ENCODE measurements at regions of chrX and their contacts with region 1.

Region 1: DNA sequence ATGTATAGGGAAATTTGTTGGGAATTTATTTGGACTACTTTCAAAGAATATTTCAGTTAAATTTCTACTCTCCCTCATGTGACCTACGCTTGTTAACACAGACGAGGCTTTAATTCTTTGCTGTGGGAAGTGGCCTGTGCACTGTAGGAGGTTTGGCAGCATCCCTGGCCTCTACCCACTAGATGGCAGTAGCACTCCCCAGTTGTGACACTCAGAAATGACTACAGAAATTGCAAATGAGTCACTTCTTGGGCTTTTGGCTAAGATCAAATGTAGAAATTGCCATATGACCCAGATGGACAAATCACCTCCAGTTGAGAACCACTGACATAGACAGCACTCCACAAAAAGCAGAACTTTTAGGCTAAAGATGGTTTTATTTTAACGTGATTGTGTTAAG is 22.1 kb downstream of the PIR start:
- DNase-seq: no peak
- H3K4me3 ChIP-seq: no peak overlapping the region
- H3K27me3 ChIP-seq: no peaks in the 10 kb centered on the region
- CTCF ChIP-seq: peak; percentile 79

Region 2: DNA sequence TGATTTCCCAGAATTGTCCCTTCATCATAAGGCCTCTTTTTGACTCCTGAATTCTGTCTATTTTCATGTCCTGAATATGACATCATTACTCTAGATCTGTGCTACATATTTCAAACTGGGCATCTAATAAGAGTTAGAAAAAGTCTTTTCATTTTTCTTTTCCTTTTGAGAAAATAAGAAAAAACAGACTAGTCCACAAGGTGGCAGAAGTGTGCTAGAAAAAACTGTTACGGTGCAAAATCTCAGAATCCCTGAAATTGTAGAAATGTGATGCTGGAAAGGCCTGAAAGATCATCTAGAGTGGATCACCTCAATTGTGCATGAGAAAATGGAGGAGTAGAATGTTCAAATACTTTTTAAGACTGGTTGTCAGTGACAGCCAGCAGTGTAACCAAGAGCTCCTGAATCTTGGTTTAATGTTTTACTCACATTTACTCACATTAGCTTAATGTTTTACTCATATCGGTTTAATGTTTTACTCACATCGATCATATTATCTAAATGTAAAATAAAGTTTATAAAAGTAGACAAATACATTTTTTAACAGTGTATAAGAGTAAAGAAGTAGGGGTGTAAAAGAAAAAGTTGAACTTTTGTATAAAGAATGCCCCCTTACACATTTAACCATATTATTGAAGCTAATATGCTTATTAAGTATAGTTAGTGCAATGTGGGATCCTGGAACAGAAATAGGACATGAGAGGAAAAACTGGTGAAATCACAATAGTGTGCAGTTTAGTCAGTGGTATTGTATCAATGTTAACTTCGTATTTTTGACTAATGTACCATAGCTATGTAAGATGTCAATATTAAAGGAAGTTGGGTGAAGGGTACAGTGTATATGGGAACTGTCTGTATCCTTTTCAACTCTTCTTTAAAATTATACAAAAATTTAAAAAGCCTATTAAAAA is 170.8 kb before region 1 on chrX:
- CTCF ChIA-PET with region 1: interaction called, 14 read pairs
- POLR2A ChIA-PET with region 1: no interaction called
- DNase-seq: no peak
- H3K4me3 ChIP-seq: no peak overlapping the region
- H3K27me3 ChIP-seq: no peaks in the 10 kb centered on the region
- CTCF ChIP-seq: peak; percentile 45

Region 3: DNA sequence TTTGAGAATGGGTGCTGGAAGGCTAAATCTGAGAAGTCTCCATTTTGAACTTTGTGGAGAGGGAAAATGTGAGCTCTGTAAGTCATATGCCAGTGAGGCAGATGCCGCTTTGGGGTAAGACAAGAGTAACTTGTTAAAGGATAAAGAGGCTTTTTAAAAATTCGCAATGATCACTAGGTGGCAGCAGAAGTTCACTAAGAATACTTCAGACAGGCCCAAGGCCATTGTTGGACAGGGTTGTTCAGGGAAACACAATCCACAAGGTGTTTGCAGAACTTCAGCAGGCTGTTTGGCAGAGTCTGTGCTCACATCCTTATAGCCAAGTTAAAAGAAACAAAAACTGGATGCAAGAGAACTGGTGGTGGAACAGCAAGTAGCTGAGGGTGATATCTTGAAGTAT is 122.0 kb before region 1 on chrX:
- CTCF ChIA-PET with region 1: interaction called, 172 read pairs
- POLR2A ChIA-PET with region 1: no interaction called
- DNase-seq: peak; percentile 15
- H3K4me3 ChIP-seq: no peak overlapping the region
- H3K27me3 ChIP-seq: no peaks in the 10 kb centered on the region; the same call in 1 of the 2 replicates
- CTCF ChIP-seq: peak; percentile 45

Region 4: DNA sequence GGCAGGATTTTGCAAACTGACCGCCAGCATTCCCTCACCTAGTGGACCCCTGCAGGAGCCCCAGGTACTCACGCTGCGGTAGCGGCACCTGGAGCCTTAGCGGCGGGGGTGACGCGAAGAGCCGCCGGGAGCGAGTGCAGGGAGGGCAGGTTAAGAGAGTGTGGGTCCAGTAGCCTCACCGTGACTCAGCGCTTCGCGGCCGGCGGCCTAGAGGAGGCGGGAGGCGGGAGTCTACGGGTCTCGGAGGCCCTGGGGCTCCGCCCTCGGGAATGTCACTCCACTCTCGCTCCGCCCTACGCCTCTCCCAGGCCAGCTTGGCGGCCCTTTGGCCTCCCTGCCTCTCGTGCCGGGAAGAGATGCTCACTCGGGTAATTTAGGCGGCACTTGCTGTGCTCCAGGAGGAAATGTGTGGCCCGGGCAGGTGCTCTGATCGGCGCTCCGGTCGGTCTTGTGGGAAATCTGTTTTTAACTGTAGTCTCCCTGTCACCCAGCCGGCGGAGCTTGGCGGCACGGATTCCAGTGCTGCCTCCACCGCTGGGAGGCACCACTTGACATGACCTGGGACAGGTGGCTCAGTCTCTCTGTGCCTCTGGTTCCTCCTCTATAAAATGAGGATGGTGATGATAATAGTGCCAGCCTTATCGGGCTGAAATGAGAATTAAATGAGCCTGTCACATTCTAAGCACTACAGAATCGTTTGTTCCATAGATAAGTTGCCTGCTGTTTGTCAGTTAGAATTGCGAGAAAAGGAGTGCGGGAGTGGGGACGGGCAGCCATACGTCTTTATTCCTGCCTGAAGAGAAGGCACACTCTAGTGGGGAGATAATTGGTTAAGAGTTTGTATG is 22.3 kb after region 1 on chrX and contains the start of gene PIR:
- CTCF ChIA-PET with region 1: no interaction called
- POLR2A ChIA-PET with region 1: no interaction called
- DNase-seq: peak; percentile 27
- H3K4me3 ChIP-seq: peak within 1 kb of the TSS; percentile 50
- H3K27me3 ChIP-seq: no peaks in the 10 kb centered on the region
- CTCF ChIP-seq: peak; percentile 56
- polyA plus RNA-seq, gene PIR: 11.7 and 16.8 TPM in 2 replicates

Measured in BJ (cell line).